ENCODE measurements at regions of chr11 and their contacts with region 1.

Region 1: DNA sequence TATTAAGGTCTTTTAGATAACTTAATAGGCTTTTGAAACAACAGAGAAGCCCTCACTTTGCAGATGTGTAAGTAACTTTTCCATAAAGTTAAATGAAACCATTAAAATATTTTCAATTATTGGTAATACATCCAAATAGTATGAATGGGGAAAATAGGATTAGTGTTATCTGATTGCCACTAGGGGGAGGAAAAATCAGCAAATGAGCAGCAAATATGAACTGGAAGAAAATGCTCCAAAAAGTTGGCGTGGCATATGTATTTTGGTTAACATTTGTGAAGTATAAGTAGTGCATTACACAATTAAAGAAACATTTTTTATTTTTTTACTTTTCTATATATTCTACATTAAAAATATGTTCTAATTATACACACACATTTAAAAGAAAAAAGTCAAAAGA is 259.8 kb upstream of the ANO5 start:
- DNase-seq: no peak
- ATAC-seq: peak; percentile 37; the same call in 1 of the 3 replicates
- H3K4me3 ChIP-seq: no peak overlapping the region
- H3K27ac ChIP-seq: no peak overlapping the region
- H3K4me1 ChIP-seq: no peaks in the 10 kb centered on the region
- H3K27me3 ChIP-seq: no peaks in the 10 kb centered on the region
- CTCF ChIP-seq: peak; percentile 33 to 44 (median 36); a peak in 5 of 6 replicates
- EP300 ChIP-seq: no peak
- POLR2A ChIP-seq: no peak
- RAD21 ChIP-seq: peak; percentile 33

Region 2: DNA sequence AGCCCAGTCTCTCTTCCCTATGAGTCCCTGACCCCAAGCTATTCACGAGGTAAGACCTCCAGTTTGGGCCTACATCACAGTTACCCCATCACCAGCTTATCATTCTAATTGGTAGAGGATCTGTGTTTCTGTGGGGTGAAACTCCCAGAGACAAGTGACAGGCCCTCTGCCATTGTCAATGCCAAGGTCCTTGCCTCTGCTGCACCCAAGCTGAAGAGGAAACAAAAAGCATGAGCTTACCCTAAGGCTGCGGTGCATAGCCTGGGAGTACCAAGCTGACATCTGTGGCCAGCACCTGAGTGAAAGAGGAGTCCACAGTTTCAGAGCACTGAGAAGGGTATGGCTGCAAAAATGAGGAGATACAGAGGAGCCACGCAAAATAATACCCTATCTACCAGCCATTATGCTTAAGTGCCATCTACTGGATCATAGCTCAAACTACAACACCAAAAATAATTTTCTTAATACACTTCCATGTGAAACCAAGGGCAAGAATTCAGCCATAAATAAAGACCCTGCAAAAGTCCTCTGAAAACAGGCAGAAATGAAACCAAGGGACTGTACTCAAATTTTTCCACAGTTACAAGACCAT is 197.5 kb after region 1 on chr11:
- CTCF ChIA-PET with region 1: no interaction called
- POLR2A ChIA-PET with region 1: no interaction called
- RAD21 ChIA-PET with region 1: interaction called, 4 read pairs
- SMC1A ChIA-PET with region 1: no interaction called
- in situ Hi-C with region 1: no loop called
- intact Hi-C with region 1: loop called (anchors 2 kb)
- DNase-seq: no peak
- ATAC-seq: peak; percentile 75
- H3K4me3 ChIP-seq: no peak overlapping the region
- H3K27ac ChIP-seq: no peak overlapping the region
- H3K4me1 ChIP-seq: no peaks in the 10 kb centered on the region
- H3K27me3 ChIP-seq: no peaks in the 10 kb centered on the region
- CTCF ChIP-seq: peak; percentile 28 to 56 (median 37); a peak in 5 of 6 replicates
- EP300 ChIP-seq: no peak
- POLR2A ChIP-seq: no peak
- RAD21 ChIP-seq: peak; percentile 45

Region 3: DNA sequence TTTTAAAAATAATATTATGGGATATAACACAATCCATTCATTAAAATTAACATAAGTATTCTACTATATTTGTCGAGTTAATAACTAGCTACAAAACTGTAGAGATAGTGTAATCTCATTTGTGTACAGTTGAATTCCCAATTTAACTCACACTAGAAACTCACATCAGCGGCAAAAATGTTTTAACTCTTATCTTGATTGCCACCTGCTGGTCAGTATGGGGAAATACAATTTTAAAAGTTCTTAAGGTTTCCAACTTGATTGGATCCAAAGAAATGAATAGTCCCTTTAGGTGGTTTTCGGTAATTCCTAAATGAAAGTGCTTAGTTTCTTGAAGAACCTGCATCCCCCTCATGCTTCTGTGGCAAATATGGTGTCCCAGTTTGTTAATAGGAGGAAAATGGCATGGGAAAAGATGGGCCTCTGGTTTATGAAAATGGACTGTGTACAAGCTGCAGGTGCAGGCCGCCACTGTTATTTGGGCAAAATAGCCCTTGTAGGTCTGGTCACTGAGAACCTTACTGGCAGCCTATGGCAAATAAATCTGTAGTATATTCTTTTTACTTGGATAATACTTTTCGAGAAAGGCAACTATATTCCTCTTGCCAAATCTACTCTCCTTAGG is 371.4 kb after region 1 on chr11:
- CTCF ChIA-PET with region 1: no interaction called
- POLR2A ChIA-PET with region 1: no interaction called
- RAD21 ChIA-PET with region 1: no interaction called
- SMC1A ChIA-PET with region 1: no interaction called
- in situ Hi-C with region 1: no loop called
- intact Hi-C with region 1: loop called (anchors 10 kb)
- DNase-seq: no peak
- ATAC-seq: peak; percentile 66
- H3K4me3 ChIP-seq: no peak overlapping the region
- H3K27ac ChIP-seq: no peak overlapping the region
- H3K4me1 ChIP-seq: no peaks in the 10 kb centered on the region
- H3K27me3 ChIP-seq: no peaks in the 10 kb centered on the region
- CTCF ChIP-seq: peak; percentile 40 to 64 (median 48); a peak in 5 of 6 replicates
- EP300 ChIP-seq: no peak
- POLR2A ChIP-seq: no peak
- RAD21 ChIP-seq: peak; percentile 73

Measured in GM12878 (cell line).